GM10248 (cell line): ENCODE measurements at regions of chr4 and their contacts with region 1.

Region 1: DNA sequence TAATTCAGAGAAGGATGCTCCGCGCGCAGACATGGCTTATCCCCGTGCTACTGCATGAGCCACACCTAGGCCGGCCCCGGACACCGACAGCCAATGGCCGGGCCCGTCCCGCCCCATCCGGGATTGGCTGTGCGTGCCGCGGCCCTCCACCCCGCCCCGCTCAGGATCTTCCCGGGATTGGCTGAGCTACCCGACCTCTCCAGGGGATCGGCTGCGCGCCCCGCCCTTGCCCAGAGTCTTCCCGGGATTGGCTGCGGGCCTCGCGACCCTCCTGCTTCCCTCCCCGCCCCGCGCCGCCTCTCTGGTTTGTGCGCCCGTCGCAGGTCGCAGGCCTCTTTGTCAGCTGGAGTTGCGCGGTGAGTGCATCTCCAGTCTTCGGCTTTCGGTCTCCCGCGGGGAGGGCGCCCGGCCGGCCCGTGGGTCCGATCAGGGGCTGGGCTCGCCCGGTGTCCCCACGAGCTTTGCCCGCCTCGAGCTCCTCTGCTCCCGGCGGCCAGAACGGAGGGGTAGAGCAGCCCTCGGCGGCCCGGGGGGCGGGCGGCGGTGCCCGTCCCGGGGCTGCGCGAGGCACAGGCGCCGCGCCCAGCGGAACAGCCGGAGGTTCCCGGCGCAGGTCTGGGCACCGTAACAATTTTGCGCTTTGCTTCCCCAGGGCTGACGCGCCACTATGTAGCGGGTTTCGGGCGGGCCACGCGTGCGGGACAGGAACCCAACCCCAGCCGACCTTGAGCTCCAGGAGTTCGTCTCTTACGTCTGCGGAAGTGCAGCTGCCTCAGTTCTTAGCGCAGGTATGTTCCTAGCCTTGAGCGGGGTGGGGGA is 38.8 kb downstream of the ERVMER34-1 start:
- DNase-seq: peak; percentile 96
- CTCF ChIP-seq: no peak

Region 2: GRCh38 chr4:52572936-52573485 is 139.4 kb before region 1 on chr4:
- CTCF ChIA-PET with region 1: no interaction called
- POLR2A ChIA-PET with region 1: no interaction called
- DNase-seq: no peak
- CTCF ChIP-seq: no peak

Region 3: DNA sequence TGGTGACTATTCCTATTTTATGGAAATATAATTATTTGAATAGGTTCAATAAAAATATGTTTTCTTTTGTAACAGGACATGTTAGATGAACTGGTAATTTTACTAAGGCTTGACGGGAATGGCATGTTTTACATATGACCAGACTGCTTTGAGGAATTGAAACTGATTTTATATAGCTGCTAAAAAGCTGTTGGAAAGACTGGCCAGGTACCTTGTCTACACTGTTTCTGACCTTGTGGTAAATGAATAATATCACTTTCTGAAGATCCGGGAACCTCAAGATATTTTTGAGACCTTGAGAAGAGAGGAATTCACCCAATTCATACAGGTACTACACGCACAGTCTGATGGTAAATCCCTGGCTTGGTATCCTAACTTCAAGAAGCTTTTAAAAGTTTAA is 11.2 kb before region 1 on chr4:
- CTCF ChIA-PET with region 1: interaction called, 9 read pairs
- POLR2A ChIA-PET with region 1: interaction called, 12 read pairs
- DNase-seq: peak; percentile 31
- CTCF ChIP-seq: no peak